G401 (cell line): ENCODE measurements at regions of chr15 and their contacts with region 1.

Region 1: GRCh38 chr15:89003865-89004725 is 84.2 kb upstream of the ABHD2 start:
- DNase-seq: peak; percentile 25

Region 2: GRCh38 chr15:88690331-88690730 is 313.8 kb before region 1 on chr15:
- in situ Hi-C with region 1: no loop called
- DNase-seq: no peak

Region 3: DNA sequence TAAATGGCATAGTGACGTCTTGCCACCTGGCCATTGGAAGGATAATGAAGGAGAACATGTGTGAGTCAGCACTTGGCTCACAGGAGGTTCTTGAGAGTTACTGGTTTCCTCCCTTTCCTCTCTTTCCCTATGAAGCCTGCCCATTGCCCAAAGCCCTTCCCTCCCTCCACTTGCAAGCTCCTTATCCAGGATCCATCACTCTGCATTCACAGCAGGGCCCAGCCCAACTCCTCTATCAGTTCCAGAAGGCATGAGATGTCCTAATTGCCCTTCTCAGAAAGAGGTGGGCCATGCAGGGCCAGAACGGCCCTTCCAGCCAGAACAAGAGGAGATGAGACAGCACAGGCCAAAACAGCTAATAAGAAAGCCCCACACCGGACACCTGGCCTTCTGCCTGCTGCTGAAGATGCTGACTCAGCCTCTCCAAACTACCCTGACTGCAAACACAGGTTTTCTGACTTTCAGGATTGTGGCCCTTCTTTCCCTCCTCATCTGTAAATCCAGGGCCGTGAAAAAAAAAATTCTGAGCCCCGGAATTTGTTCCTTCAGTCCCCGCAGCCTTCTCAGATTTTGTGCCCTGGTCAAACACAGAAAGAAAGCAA is 138.5 kb before region 1 on chr15:
- in situ Hi-C with region 1: no loop called
- DNase-seq: no peak

Region 4: DNA sequence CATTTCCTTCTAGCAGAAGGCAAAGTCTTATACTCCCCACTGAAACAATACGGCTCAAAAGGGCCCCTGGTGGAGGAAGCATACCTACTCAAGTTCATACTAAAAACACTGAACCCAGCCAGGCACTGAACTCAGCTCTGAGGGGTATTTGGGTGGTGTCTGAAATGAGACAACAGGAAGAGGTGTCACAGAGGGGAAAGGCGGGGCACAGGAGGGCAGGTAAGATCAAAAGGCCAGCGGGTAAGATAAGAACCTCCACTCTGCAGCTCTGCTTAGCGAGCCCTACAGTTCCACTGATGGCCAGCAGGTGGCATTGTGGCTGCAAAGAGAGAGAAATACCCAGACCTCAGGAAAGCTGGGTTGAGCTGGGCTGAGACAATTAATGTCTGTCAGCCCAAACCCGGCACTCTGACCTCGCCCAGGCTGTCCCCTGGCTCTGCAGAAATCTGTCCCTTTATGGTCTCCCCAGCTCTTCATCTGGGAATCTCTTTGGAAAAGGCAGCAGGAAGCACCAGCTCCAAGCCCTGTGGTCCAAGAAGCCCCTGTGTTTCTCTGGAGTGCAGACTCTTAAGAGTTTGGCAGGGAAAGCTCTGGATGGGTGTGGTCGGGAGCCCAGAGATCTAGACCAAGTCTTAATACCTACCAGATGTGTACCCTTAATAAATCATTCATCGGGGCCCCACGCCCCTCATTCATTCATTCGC is 99.3 kb before region 1 on chr15:
- in situ Hi-C with region 1: loop called (anchors 10 kb)
- DNase-seq: peak; percentile 79